ENCODE measurements at regions of chr12 and their contacts with region 1.

Region 1: DNA sequence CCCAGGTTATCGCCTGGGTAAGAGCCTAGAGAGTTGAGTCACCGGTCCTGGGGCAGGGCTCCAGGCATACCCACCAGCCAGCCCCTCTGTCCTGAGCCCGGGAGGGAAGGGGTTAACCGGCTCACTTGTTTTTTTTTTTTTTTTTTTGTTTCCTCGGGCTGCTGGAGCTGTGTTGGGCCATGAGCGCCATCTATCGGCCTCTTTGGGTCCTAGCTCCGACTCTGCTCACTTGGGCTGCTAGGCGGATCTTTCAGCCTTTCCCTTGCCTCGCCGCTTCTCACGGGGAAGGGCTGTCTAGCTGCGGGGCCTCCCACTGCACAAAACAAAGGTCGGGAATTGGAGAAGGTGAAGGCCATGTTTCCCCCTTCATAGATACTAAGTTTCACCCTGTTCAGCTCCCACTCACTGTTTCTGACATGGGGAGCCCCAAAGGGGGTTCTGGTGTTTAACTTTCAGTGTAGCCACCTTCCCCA is 2.8 kb upstream of the SMUG1 start:
- DNase-seq: peak; percentile 66 to 93 (median 74)
- ATAC-seq: peak; percentile 74
- H3K4me3 ChIP-seq: no peak overlapping the region
- H3K4me3 Mint-ChIP-seq: peak overlapping the region; percentile 5
- H3K27ac ChIP-seq: no peak overlapping the region
- H3K27ac Mint-ChIP-seq: no peak overlapping the region
- H3K4me1 ChIP-seq: peaks cover 31% of the 10 kb centered on the region
- H3K4me1 Mint-ChIP-seq: peaks cover 22% of the 10 kb centered on the region
- H3K27me3 ChIP-seq: peaks cover 30 to 34% of the 10 kb centered on the region in 2 experiments
- H3K27me3 Mint-ChIP-seq: peaks cover 54% of the 10 kb centered on the region
- CTCF ChIP-seq: peak; percentile 76

Region 2: DNA sequence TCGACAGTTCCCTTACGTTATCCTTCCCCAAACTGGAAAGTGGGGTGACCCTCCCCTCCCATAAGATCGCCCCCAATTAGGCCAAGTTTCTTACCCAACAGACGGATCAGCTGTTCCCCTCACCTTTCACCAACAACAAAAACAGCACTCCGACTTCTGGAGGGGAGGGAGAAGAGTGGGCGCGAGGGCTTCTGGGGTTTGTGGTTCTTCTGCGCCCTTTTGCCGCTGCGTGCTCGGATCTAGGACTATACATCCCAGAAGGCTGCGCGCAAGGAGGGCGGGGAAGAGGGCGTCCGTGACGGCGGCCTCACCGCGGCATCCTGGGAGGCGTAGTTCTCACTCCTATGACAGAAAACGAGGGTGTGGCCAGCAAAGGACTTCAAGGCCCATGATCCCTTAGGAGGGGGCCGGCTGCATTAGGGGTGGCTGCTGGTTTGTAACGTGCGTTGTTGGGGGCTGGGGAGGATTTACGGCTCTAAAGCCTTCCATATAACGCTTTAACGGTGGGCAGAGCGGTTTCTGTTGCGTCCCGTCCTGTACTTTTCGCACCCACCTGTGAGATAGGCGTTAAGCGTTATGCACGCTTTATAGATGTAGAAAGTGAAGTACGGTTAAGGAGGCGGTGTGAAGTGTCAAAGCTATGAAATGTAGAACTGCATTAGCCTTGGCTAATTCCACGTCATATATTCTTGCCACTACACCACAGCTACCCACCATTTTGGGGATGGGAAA is 464.1 kb before region 1 on chr12 and contains the start of gene CALCOCO1:
- CTCF ChIA-PET with region 1: no interaction called
- POLR2A ChIA-PET with region 1: interaction called, 3 read pairs
- intact Hi-C with region 1: loop called in 1 of 2 experiments (anchors 5 kb)
- DNase-seq: peak; percentile 89 to 99 (median 96)
- ATAC-seq: peak; percentile 98
- H3K4me3 ChIP-seq: peak within 1 kb of the TSS; percentile 73
- H3K4me3 Mint-ChIP-seq: peak within 1 kb of the TSS; percentile 92
- H3K27ac ChIP-seq: peak within 1 kb of the TSS; percentile 42 to 52
- H3K27ac Mint-ChIP-seq: peak within 1 kb of the TSS; percentile 82
- H3K4me1 ChIP-seq: peaks cover 27% of the 10 kb centered on the region
- H3K4me1 Mint-ChIP-seq: peaks cover 34% of the 10 kb centered on the region
- H3K27me3 ChIP-seq: no peaks in the 10 kb centered on the region
- H3K27me3 Mint-ChIP-seq: no peaks in the 10 kb centered on the region
- CTCF ChIP-seq: no peak
- total RNA-seq, gene CALCOCO1: 66.8 to 69.3 TPM

Region 3: GRCh38 chr12:53791735-53792326 is 399.8 kb before region 1 on chr12:
- CTCF ChIA-PET with region 1: no interaction called
- POLR2A ChIA-PET with region 1: no interaction called
- intact Hi-C with region 1: loop called (anchors 1 to 5 kb)
- DNase-seq: peak in 13 of 14 experiments; percentile 3 to 62 (median 20)
- ATAC-seq: no peak
- H3K4me3 ChIP-seq: no peak overlapping the region
- H3K4me3 Mint-ChIP-seq: no peak overlapping the region
- H3K27ac ChIP-seq: no peak overlapping the region
- H3K27ac Mint-ChIP-seq: no peak overlapping the region
- H3K4me1 ChIP-seq: peaks cover 3% of the 10 kb centered on the region
- H3K4me1 Mint-ChIP-seq: no peaks in the 10 kb centered on the region
- H3K27me3 ChIP-seq: peaks cover 20 to 32% of the 10 kb centered on the region in 2 experiments
- H3K27me3 Mint-ChIP-seq: peaks cover 38% of the 10 kb centered on the region
- CTCF ChIP-seq: peak; percentile 69

Region 4: DNA sequence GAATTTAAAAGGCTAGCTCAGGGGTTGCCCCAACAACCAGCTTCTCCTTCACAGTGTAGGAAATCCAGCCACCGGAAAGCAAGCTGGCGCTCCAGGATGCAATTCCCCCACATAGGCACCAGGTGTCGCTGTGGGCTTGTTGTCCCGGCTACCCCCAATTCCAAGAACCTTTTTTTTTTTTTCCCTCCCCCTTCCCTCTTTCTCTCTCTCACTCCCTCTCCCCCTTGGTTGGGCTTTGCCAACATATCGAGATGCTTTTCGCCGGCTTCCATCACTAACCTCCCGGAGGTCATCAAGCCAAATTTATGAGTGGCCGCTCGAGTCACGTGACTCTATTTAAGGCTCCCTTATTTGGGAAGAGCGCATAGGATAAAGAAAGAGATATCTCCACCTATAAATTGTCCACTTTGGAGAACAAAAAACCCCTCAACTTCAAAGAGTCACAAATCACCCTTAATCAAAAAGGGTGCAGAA is 158.9 kb before region 1 on chr12 and contains the start of gene HOXC5:
- CTCF ChIA-PET with region 1: interaction called, 14 read pairs
- POLR2A ChIA-PET with region 1: interaction called, 7 read pairs
- intact Hi-C with region 1: loop called (anchors 2 kb)
- DNase-seq: peak; percentile 31 to 79 (median 50)
- ATAC-seq: peak; percentile 63
- H3K4me3 ChIP-seq: no peak within 1 kb of the TSS
- H3K4me3 Mint-ChIP-seq: peak within 1 kb of the TSS; percentile 42
- H3K27ac ChIP-seq: no peak within 1 kb of the TSS
- H3K27ac Mint-ChIP-seq: no peak within 1 kb of the TSS
- H3K4me1 ChIP-seq: peaks cover 49% of the 10 kb centered on the region
- H3K4me1 Mint-ChIP-seq: peaks cover 22% of the 10 kb centered on the region
- H3K27me3 ChIP-seq: peaks cover 91 to 98% of the 10 kb centered on the region in 2 experiments
- H3K27me3 Mint-ChIP-seq: peaks cover 97% of the 10 kb centered on the region
- CTCF ChIP-seq: peak; percentile 81
- total RNA-seq, gene HOXC5: not detected

Region 5: GRCh38 chr12:54214553-54215406 is 23.2 kb after region 1 on chr12:
- CTCF ChIA-PET with region 1: interaction called, 13 read pairs
- POLR2A ChIA-PET with region 1: no interaction called
- intact Hi-C with region 1: no loop called
- DNase-seq: peak; percentile 78 to 96 (median 86)
- ATAC-seq: peak; percentile 79
- H3K4me3 ChIP-seq: peak overlapping the region; percentile 53
- H3K4me3 Mint-ChIP-seq: peak overlapping the region; percentile 54
- H3K27ac ChIP-seq: no peak overlapping the region
- H3K27ac Mint-ChIP-seq: no peak overlapping the region
- H3K4me1 ChIP-seq: peaks cover 41% of the 10 kb centered on the region
- H3K4me1 Mint-ChIP-seq: peaks cover 46% of the 10 kb centered on the region
- H3K27me3 ChIP-seq: peaks cover 0 to 5% of the 10 kb centered on the region in 2 experiments
- H3K27me3 Mint-ChIP-seq: peaks cover 13% of the 10 kb centered on the region
- CTCF ChIP-seq: peak; percentile 99

Region 6: DNA sequence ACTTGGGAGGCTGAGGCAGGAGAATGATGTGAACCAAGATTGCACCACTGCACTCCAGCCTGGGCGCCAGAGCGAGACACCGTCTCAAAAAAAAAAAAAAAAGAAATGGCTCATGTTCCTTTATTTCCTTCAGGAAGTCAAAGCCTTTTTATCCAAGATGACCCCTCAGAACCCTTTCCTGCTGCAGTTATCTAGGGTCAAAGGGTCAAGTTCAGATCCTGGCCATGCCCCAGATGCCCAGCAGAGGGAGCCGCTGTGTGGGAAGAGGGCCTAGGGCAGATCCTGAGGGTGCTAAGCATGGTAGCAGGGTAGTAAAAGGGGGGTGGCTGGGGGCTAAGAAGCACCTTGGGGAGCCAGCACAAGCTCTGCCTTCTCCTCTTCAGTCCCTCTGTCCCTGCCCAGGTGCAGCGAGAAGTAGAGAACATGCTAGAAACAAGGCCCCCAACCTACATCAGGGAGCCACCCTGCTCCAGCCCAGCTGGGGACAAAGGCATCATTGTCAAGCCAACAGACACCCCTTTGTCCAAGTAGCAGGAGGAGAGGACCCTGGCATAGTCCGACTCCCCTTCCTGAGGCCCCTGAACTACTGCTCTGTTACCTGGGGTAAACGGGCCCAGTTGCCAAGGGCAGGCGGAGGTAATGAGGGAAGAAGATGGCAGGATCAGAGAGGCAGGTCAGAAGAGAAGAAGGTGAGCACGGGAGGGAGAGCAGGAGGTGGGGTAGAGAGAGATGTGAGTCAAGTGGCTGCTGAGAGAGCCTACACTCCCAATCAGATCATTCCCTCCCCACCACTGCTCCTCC is 102.8 kb after region 1 on chr12:
- CTCF ChIA-PET with region 1: no interaction called
- POLR2A ChIA-PET with region 1: no interaction called
- intact Hi-C with region 1: no loop called
- DNase-seq: peak in 13 of 14 experiments; percentile 35 to 74 (median 53)
- ATAC-seq: peak; percentile 72
- H3K4me3 ChIP-seq: no peak overlapping the region
- H3K4me3 Mint-ChIP-seq: no peak overlapping the region
- H3K27ac ChIP-seq: no peak overlapping the region
- H3K27ac Mint-ChIP-seq: no peak overlapping the region
- H3K4me1 ChIP-seq: peaks cover 9% of the 10 kb centered on the region
- H3K4me1 Mint-ChIP-seq: peaks cover 6% of the 10 kb centered on the region
- H3K27me3 ChIP-seq: peaks cover 1 to 3% of the 10 kb centered on the region in 2 experiments
- H3K27me3 Mint-ChIP-seq: peaks cover 10% of the 10 kb centered on the region
- CTCF ChIP-seq: peak; percentile 71